HEK293T (cell line): ENCODE measurements at regions of chr9 and their contacts with region 1.

Region 1: GRCh38 chr9:136410500-136411287 is at the starts of genes ENTR1 and PMPCA:
- DNase-seq: peak; percentile 97

Region 2: DNA sequence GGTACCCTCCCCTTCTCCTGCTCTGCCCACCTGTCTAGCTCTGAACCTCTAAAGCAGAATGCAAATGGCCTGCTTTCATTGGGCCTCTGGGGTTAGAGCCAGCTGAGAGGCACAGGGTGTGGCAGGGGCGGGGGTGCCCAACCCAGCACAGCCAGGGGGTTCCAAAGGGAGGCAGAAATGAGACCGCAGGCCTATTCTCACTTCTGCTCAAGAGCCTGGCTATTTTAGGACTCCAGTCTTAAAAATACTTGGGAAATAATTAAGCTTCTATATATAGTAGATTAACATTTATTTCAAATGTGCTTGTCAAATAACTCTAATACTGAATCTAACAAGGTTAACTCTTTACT is 170.7 kb before region 1 on chr9:
- CTCF ChIA-PET with region 1: no interaction called
- POLR2A ChIA-PET with region 1: no interaction called
- DNase-seq: no peak

Region 3: DNA sequence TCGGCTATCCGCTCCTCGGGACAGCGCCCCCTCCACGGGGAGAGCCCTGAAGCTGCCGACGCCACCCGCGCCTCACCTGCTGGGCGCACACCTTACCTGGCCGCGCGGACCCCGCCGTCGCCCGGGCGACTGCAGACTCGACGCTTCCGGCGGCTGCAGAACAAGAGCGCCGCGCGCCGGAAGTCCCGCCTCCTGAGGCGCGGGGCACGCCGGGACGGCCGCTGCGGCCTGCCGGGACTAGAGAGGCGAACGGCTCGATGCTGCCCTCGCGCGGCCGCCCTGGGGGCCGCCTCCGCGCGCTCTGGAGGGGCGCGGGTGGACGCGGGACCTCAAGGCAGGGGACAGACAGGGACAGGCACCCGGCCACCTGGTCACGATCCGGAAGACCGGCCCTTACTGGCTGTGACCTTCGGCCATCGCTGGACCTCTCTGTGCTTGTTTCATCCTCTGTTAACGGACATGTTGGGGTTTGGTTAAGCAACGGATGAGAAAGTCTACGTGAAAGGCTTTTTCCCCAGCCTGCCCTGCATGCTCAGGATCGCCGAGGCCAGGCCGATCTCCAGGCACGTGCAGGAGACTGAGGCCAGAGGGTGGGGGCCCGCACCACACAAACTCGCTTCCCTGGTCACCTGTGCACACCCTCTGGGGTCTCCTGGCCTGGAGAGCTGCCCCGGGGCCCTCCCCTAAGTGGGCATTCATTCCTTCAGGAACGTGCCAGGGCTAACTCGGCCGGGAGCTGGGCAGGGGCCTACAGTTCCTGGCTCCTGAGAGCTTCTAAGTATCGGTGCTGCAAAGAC is 10.5 kb before region 1 on chr9 and contains the start of gene SNAPC4:
- CTCF ChIA-PET with region 1: no interaction called
- POLR2A ChIA-PET with region 1: interaction called, 10 read pairs
- DNase-seq: peak; percentile 98

Region 4: GRCh38 chr9:136482793-136483588 is 72.3 kb after region 1 on chr9 and contains the start of gene SEC16A:
- CTCF ChIA-PET with region 1: no interaction called
- POLR2A ChIA-PET with region 1: no interaction called
- DNase-seq: peak; percentile 96